Heart left ventricle (tissue), 16 donors: ENCODE measurements at regions of chr2 and their contacts with region 1.

Region 1: GRCh38 chr2:62505750-62506420 is at the start of gene TMEM17:
- DNase-seq: peak; percentile 95 to 96 (median 96)
- ATAC-seq: peak; percentile 98
- H3K4me3 ChIP-seq: peak within 1 kb of the TSS; percentile 58 to 84 (median 76)
- H3K27ac ChIP-seq: peak within 1 kb of the TSS; percentile 80 to 95 (median 88)
- H3K4me1 ChIP-seq: peaks cover 0 to 18% (median 7%) of the 10 kb centered on the region in 12 donors
- H3K27me3 ChIP-seq: no peaks in the 10 kb centered on the region
- CTCF ChIP-seq: peak in 1 of 12 donors; percentile 9
- POLR2A ChIP-seq: peak in 1 of 2 donors; percentile 31
- total RNA-seq, gene TMEM17: 1.2 to 2.3 (median 1.6) TPM

Region 2: GRCh38 chr2:62382757-62383475 is 123.0 kb before region 1 on chr2:
- intact Hi-C with region 1: no loop called
- DNase-seq: no peak
- ATAC-seq: peak in 1 of 4 donors; percentile 56
- H3K4me3 ChIP-seq: no peak overlapping the region
- H3K27ac ChIP-seq: peak overlapping the region in 4 of 12 donors; percentile 3 to 40 (median 23)
- H3K4me1 ChIP-seq: peaks cover 0 to 44% (median 18%) of the 10 kb centered on the region in 12 donors
- H3K27me3 ChIP-seq: no peaks in the 10 kb centered on the region
- CTCF ChIP-seq: no peak
- POLR2A ChIP-seq: no peak

Region 3: GRCh38 chr2:62467475-62468321 is 38.2 kb before region 1 on chr2:
- intact Hi-C with region 1: loop called in 1 of 10 experiments (anchors 5 kb)
- DNase-seq: peak in 2 of 5 donors; percentile 41 to 61
- ATAC-seq: peak; percentile 48 to 79 (median 70)
- H3K4me3 ChIP-seq: no peak overlapping the region
- H3K27ac ChIP-seq: peak overlapping the region in 8 of 12 donors; percentile 26 to 72 (median 52)
- H3K4me1 ChIP-seq: peaks cover 0 to 30% (median 9%) of the 10 kb centered on the region in 12 donors
- H3K27me3 ChIP-seq: no peaks in the 10 kb centered on the region
- CTCF ChIP-seq: peak in 1 of 12 donors; percentile 7
- POLR2A ChIP-seq: no peak

Region 4: GRCh38 chr2:62550461-62550860 is 44.6 kb after region 1 on chr2:
- intact Hi-C with region 1: no loop called
- DNase-seq: no peak
- ATAC-seq: no peak
- H3K4me3 ChIP-seq: no peak overlapping the region
- H3K27ac ChIP-seq: no peak overlapping the region
- H3K4me1 ChIP-seq: no peaks in the 10 kb centered on the region
- H3K27me3 ChIP-seq: no peaks in the 10 kb centered on the region
- CTCF ChIP-seq: no peak
- POLR2A ChIP-seq: no peak